ENCODE measurements at regions of chr9 and their contacts with region 1.

Region 1: GRCh38 chr9:136525207-136525606 is 20.6 kb downstream of the NOTCH1 start:
- DNase-seq: no peak
- H3K27ac ChIP-seq: peak overlapping the region; percentile 83
- CTCF ChIP-seq: no peak

Region 2: DNA sequence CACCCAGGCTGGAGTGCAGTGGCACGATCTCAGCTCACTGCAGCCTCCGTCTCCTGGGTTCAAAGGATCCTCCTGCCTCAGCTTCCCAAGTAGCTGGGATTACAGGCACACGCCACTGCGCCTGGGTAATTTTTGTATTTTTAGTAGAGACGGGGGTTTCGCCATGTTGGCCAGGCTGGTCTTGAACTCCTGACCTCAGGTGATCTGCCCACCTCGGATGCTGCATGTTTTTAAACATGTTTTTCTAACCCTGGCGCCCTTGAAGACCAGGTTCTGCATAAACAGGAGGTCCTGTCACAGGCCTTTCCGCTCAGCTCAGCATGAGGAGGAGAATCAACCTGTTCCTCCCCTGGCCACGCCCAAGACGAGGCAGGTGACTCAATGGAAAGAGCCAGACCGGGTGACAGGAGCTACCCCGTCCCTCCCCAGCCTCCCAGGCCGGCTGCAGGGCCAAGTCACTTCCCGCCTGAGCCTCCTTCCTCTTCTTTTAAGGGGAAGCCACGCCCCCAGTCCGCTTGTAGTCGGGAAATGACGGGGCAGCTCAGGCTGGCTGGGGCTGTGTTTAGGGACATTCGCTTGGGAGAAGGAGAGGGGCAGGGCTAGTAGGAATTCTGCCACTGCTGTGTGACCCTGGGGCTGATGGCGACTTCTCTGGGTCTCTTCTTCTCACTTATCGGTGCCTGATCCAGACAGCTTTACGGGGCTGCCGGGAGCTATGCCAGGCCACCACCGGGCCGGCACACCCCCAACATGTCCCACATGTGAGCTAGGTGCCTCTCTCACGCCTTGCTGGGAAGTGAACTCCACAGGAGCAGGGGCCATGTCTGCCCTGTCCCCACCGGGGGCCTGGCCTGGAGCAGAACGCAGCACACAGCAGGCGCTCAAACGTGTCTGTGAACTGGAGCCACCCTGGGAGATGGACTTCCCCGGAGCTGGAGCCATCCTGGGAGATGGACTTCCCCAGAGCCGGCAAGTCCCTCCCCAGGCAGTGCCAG is 14.5 kb after region 1 on chr9:
- CTCF ChIA-PET with region 1: no interaction called
- POLR2A ChIA-PET with region 1: interaction called, 11 read pairs
- DNase-seq: peak; percentile 78
- H3K27ac ChIP-seq: peak overlapping the region; percentile 100
- CTCF ChIP-seq: no peak

Measured in RWPE1 (cell line).